AG04449 (cell line): ENCODE measurements at regions of chr5 and their contacts with region 1.

Region 1: DNA sequence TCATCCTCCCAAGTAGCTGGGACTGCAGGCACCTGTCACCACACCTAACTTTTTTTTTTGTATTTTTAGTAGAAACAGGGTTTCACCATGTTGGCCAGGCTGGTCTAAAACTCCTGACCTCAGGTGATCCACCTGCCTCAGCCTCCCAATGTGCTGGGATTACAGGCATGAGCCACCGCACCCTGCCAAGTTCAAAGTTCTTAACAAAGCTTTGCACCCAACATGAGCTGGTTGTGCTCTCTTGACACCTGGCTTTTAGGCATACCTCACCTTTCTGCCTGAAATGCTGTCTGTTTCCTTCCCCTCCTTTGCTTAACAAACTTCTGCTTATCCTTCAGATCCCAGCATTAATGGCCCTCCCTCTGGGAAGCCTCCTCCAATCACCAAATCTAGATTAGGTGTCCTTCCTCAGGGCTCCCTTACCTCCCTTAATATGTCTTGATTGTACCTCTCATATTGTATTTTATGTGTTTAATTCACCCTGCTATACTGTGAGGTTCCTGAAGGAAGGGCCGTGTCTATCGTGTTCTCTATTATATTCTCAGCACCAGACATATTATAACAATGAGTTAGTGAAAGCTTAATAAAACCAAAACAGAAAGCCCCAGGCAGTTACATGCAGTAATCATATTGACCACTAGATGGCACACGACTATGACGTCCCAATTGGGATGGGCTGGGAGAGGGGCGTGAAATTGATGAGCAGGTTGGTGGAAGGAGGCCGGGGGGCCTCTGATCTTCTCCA is 62.9 kb upstream of the PPARGC1B start:
- DNase-seq: no peak
- H3K4me3 ChIP-seq: no peak overlapping the region
- CTCF ChIP-seq: peak; percentile 54

Region 2: GRCh38 chr5:149381987-149382340 is 285.3 kb before region 1 on chr5:
- CTCF ChIA-PET with region 1: no interaction called
- POLR2A ChIA-PET with region 1: no interaction called
- DNase-seq: no peak
- H3K4me3 ChIP-seq: peak overlapping the region; percentile 18
- CTCF ChIP-seq: peak; percentile 95

Region 3: DNA sequence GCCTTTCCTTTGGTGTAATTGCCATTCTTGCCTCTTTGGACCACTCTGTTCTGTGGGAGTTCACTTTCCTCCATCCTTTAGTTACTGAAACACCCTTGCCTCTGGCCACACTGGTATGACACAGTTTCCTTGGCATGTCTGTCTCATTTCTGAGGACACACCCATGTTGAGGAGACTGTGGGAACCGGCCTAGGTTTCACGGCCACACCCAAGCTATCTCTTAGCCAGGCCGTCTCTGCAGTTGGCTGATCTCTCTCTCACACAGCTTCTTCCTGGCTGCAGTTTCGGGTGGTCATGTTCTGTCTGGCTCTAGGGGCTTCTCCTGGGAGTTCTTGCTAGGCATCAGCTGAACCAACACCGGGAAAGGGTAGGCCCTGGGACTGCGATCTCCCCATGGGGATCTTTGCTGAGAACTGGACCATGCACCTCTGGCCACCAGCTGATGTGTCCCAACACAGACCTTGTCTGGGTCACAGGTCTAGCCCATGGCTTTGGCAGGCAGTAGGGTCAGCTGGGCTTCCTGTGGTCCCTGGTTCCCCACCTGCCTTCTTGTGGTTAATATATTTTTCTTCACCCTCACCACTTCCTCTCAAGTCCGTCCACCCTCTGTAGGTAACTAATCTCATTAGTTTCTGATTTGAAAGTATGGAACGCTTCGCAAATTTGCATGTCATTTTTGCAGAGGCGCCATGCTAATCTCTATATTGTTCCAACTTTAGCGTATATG is 61.1 kb before region 1 on chr5:
- CTCF ChIA-PET with region 1: no interaction called
- POLR2A ChIA-PET with region 1: no interaction called
- DNase-seq: no peak
- H3K4me3 ChIP-seq: no peak overlapping the region
- CTCF ChIP-seq: no peak

Region 4: GRCh38 chr5:149683964-149684363 is 16.7 kb after region 1 on chr5:
- CTCF ChIA-PET with region 1: interaction called, 10 read pairs
- POLR2A ChIA-PET with region 1: no interaction called
- DNase-seq: no peak
- H3K4me3 ChIP-seq: no peak overlapping the region
- CTCF ChIP-seq: no peak